Ovary (tissue), 10 donors: ENCODE measurements at regions of chr3 and their contacts with region 1.

Region 1: GRCh38 chr3:102687851-102688555 is 253.2 kb downstream of the ZPLD1 start:
- DNase-seq: no peak
- H3K4me3 ChIP-seq: no peak overlapping the region
- H3K27ac ChIP-seq: no peak overlapping the region
- H3K4me1 ChIP-seq: no peaks in the 10 kb centered on the region
- H3K27me3 ChIP-seq: no peaks in the 10 kb centered on the region
- CTCF ChIP-seq: no peak
- EP300 ChIP-seq: no peak
- POLR2A ChIP-seq: no peak

Region 2: DNA sequence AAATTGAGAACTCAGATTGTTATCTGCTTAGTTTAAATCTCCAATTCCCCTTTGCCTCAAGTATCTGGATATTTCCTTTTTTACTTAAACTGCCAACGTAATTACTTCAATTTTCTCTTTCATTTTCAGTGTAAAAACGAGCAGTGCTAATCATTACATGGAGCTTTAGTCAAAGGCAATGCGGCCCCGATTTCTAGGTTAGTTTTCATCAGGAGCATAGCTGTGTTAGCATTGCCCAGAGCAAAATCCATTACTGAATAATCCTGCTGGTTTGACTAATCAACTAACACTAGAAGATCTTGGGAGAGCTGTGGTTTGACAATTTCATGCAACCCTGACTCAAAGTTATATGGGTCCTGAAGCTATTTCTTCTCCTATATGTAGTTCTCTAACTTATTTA is 207.0 kb before region 1 on chr3:
- intact Hi-C with region 1: no loop called
- DNase-seq: no peak
- H3K4me3 ChIP-seq: no peak overlapping the region
- H3K27ac ChIP-seq: no peak overlapping the region
- H3K4me1 ChIP-seq: no peaks in the 10 kb centered on the region
- H3K27me3 ChIP-seq: no peaks in the 10 kb centered on the region
- CTCF ChIP-seq: no peak
- EP300 ChIP-seq: no peak
- POLR2A ChIP-seq: no peak

Region 3: GRCh38 chr3:102661707-102662497 is 26.1 kb before region 1 on chr3:
- intact Hi-C with region 1: loop called in 1 of 4 experiments (anchors 1 kb)
- DNase-seq: no peak
- H3K4me3 ChIP-seq: no peak overlapping the region
- H3K27ac ChIP-seq: no peak overlapping the region
- H3K4me1 ChIP-seq: no peaks in the 10 kb centered on the region
- H3K27me3 ChIP-seq: no peaks in the 10 kb centered on the region
- CTCF ChIP-seq: no peak
- EP300 ChIP-seq: no peak
- POLR2A ChIP-seq: no peak